OCI-LY7 (cell line): ENCODE measurements at regions of chr10 and their contacts with region 1.

Region 1: DNA sequence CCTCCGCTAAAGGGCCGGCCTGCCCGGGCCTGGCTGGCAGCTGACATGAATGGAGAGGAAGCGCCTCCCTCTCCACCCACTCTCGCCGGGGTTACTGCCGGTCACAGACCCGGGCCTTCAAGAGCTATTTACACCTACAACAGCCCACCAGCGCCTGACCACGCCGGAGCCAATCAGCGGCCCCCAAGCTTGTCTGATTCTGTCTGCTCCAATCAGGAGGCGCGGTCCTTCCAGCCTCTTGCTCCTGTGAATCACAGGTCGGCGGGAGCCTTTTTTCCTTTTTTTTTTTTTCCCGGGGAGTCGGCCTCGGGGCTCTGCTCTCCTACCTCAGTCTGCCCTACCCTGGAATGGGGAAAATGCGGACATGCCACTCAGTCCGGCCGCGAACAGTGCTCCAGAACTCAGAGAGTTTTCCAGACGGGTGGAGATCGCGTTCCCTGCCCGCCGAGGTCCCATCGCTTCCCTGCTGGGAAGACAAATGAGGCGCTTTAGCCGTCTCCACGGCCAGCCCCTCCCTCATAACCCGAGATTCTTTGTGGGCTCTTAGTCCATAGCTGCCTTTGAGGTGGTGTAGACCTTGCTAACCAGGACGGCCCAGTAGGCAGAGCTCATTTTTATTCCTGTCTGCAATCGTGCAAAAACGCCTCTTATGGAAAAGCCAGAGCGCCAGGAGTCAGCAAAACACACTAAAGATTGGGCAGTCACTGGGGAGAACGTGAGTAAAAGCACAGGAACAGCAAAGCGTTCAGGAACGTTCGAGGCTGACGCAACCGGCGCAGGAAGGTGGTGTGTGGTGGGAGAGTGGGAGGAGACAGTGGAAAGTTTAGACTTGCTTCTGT is 26.5 kb downstream of the SCD start:
- DNase-seq: peak; percentile 89
- H3K4me3 ChIP-seq: peak overlapping the region; percentile 73
- H3K27ac ChIP-seq: peak overlapping the region; percentile 71
- H3K4me1 ChIP-seq: peaks cover 58% of the 10 kb centered on the region
- CTCF ChIP-seq: no peak

Region 2: DNA sequence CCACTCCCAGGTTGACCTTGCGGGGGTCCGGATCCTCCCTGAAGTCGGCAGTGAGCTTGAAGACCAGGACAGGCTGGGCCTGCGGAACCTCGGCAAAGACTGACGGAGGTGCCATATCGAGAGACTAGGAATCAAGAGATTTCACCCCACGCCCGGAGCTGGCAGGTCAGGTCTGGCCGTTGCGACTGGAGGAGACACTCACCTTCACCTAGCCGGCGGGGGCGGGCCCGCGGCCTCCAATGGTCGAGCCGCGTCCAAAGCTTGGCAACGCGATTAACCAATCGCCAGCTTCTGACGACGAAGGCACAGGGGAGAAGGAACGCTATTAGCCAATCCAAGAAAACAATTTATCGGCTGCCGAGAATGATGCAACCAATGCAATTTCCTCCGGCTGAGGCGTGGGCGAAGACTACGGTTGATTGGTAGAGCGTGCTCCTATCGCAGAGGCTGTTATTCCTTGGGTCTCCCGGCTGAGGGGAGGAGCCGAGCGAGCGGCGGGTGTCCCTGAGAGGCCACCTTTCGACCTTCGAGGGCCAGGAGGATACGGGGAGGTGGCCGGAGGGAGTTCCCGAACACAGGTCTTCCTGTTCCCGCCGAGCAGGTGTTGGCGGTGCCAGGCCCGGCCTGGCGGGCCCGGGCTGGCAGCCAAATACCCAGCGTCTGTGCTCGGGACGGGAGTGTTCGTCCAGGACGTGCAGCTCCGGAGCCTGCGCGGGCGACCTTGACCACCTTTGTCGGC is 942.9 kb before region 1 on chr10 and contains the start of gene GOT1:
- CTCF ChIA-PET with region 1: no interaction called
- POLR2A ChIA-PET with region 1: no interaction called
- intact Hi-C with region 1: no loop called
- DNase-seq: peak; percentile 98
- H3K4me3 ChIP-seq: peak within 1 kb of the TSS; percentile 96
- H3K27ac ChIP-seq: peak within 1 kb of the TSS; percentile 61
- H3K4me1 ChIP-seq: peaks cover 14% of the 10 kb centered on the region
- CTCF ChIP-seq: no peak
- total RNA-seq, gene GOT1: 24.5 and 26.4 TPM in 2 replicates

Region 3: GRCh38 chr10:100185364-100186252 is 187.9 kb before region 1 on chr10 and contains the start of gene ERLIN1:
- CTCF ChIA-PET with region 1: no interaction called
- POLR2A ChIA-PET with region 1: no interaction called
- intact Hi-C with region 1: loop called (anchors 10 kb)
- DNase-seq: peak; percentile 93
- H3K4me3 ChIP-seq: peak within 1 kb of the TSS; percentile 90
- H3K27ac ChIP-seq: peak within 1 kb of the TSS; percentile 85
- H3K4me1 ChIP-seq: peaks cover 36% of the 10 kb centered on the region
- CTCF ChIP-seq: peak; percentile 57
- total RNA-seq, gene ERLIN1: 24.7 and 26.7 TPM in 2 replicates

Region 4: DNA sequence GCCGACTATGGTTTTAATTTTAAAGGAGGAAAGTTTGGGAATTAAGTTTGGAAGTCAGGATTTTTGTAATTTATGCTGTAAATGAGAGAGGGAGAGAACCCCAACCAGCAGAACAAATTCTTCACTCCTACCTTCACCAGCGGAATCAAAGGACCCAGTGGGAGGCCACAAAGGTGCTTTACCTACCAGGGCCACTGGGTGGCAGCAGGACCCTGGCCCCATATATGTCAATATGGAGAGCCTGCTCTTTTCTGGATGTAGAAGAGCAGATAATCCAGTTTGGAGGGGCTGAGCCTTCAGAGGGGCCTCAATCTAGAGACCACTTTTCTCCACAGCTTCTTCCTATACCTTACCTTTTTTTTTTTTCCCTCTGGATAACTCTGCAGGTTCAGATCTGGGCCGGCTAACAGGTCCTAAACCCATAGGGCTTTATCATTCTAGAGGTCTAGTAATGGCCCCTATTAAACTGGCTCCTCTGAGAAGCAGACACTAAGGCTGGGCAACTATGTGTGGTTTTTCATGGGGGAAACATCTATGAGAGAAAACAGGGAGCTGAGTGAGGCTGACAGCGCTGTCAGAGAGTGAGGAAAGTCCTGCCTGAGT is 35.0 kb before region 1 on chr10:
- CTCF ChIA-PET with region 1: no interaction called
- POLR2A ChIA-PET with region 1: interaction called, 88 read pairs
- intact Hi-C with region 1: loop called (anchors 5 kb)
- DNase-seq: peak; percentile 81
- H3K4me3 ChIP-seq: peak overlapping the region; percentile 24
- H3K27ac ChIP-seq: peak overlapping the region; percentile 59
- H3K4me1 ChIP-seq: peaks cover 23% of the 10 kb centered on the region
- CTCF ChIP-seq: peak; percentile 95

Region 5: GRCh38 chr10:100355086-100355485 is 18.4 kb before region 1 on chr10:
- CTCF ChIA-PET with region 1: no interaction called
- POLR2A ChIA-PET with region 1: interaction called, 88 read pairs
- intact Hi-C with region 1: no loop called
- DNase-seq: no peak
- H3K4me3 ChIP-seq: no peak overlapping the region
- H3K27ac ChIP-seq: no peak overlapping the region
- H3K4me1 ChIP-seq: peaks cover 13% of the 10 kb centered on the region
- CTCF ChIP-seq: no peak

Region 6: GRCh38 chr10:100579261-100580090 is 206.0 kb after region 1 on chr10:
- CTCF ChIA-PET with region 1: no interaction called
- POLR2A ChIA-PET with region 1: no interaction called
- intact Hi-C with region 1: no loop called
- DNase-seq: no peak
- H3K4me3 ChIP-seq: no peak overlapping the region
- H3K27ac ChIP-seq: no peak overlapping the region
- H3K4me1 ChIP-seq: no peaks in the 10 kb centered on the region
- CTCF ChIP-seq: no peak